Right cardiac atrium (tissue), 5 donors: ENCODE measurements at regions of chr12 and their contacts with region 1.

Region 1: GRCh38 chr12:124518051-124518932 is 49.1 kb downstream of the NCOR2 start:
- DNase-seq: peak; percentile 99 to 100 (median 99)
- ATAC-seq: peak; percentile 73 to 78
- H3K4me3 ChIP-seq: peak overlapping the region; percentile 35
- H3K27ac ChIP-seq: peak overlapping the region; percentile 100
- H3K4me1 ChIP-seq: peaks cover 24% of the 10 kb centered on the region
- H3K27me3 ChIP-seq: no peaks in the 10 kb centered on the region

Region 2: DNA sequence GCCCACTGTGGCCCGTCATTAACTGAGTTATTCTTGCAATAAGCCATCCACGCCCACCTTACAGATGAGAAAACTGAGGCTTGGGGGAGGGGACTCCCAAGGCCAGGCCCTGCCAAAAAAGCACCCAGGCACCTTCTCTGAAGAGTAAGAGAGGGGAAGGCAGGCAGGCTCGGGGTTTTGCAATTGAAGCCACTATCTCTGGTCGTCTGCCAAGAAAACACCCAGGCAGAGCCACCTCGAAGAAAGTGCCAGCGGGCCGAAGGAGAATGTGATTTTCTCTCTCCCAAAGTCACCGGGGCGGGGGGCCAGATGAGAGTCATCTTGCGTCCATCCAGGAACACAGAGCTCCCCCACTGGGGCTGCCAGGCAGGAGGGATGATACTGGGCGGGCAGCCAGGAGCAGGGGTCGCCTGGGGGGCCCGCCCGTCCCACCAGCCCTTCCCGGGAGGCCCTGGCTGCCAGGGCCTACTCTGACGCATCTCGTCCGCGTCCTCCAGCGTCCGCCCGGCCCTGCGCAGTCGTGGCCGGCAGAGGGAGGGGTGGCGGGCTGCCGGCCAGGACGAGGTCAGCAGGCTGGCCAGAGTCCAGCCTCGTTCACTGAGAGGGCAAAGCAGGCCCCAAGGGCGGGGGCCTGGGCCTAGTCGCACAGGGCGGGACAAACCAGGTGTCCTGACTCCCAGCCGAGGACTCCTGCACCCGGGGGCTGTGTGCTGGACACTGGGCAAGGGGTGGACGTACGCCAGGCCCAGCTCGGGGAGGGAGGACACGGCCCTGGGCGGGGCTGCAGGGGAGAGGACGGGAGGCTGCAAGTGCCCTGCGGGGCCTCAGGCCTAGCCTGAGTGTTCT is 149.0 kb before region 1 on chr12:
- intact Hi-C with region 1: loop called in 1 of 4 experiments (anchors 10 kb)
- DNase-seq: peak; percentile 95 to 97 (median 97)
- ATAC-seq: peak; percentile 87 to 89
- H3K4me3 ChIP-seq: no peak overlapping the region
- H3K27ac ChIP-seq: peak overlapping the region; percentile 91
- H3K4me1 ChIP-seq: peaks cover 4% of the 10 kb centered on the region
- H3K27me3 ChIP-seq: no peaks in the 10 kb centered on the region

Region 3: GRCh38 chr12:124740691-124741137 is 222.4 kb after region 1 on chr12:
- intact Hi-C with region 1: no loop called
- DNase-seq: peak in 2 of 3 donors; percentile 62 to 67
- ATAC-seq: peak in 1 of 2 donors; percentile 36
- H3K4me3 ChIP-seq: no peak overlapping the region
- H3K27ac ChIP-seq: no peak overlapping the region
- H3K4me1 ChIP-seq: no peaks in the 10 kb centered on the region
- H3K27me3 ChIP-seq: no peaks in the 10 kb centered on the region